Ovary (tissue), 10 donors: ENCODE measurements at regions of chr1 and their contacts with region 1.

Region 1: DNA sequence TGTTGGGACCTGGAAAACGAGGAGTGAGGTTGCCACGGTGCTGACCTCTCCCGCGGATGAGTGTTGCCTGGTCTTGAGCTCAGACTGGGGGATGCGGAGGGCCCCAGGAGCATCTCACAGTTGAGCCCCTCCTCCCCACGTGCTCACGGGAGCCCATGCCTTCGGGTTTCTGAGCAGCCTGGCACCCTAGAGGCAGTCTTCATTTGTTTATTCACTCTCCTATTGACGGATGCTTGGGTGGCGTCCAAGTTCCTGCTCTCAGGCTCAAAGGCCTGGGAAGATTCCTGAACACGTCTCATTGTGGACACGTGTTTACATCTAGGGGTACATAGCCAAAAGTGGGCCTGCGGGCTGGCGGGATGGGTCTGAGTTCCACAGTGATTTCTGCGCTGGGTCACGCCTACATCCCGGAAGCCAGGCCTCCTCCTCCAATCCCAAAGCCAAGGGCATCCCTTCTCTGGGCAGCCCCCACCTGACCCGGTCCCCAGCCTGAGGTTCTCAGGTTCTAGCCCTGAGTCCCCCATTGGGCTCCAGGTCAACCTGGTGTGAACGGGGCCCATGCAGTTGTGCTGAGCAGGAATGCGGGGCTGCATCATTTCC is 14.7 kb downstream of the WNT3A start:
- DNase-seq: peak in 2 of 5 donors; percentile 6 to 18
- H3K4me3 ChIP-seq: no peak overlapping the region
- H3K27ac ChIP-seq: no peak overlapping the region
- H3K4me1 ChIP-seq: no peaks in the 10 kb centered on the region
- H3K27me3 ChIP-seq: no peaks in the 10 kb centered on the region
- CTCF ChIP-seq: no peak
- EP300 ChIP-seq: no peak
- POLR2A ChIP-seq: no peak

Region 2: GRCh38 chr1:228062781-228063171 is 41.3 kb after region 1 on chr1:
- intact Hi-C with region 1: loop called in 1 of 4 experiments (anchors 1 kb)
- DNase-seq: no peak
- H3K4me3 ChIP-seq: no peak overlapping the region
- H3K27ac ChIP-seq: no peak overlapping the region
- H3K4me1 ChIP-seq: no peaks in the 10 kb centered on the region
- H3K27me3 ChIP-seq: peaks cover 3% of the 10 kb centered on the region
- CTCF ChIP-seq: no peak
- EP300 ChIP-seq: no peak
- POLR2A ChIP-seq: no peak